ENCODE measurements at regions of chr22 and their contacts with region 1.

Region 1: DNA sequence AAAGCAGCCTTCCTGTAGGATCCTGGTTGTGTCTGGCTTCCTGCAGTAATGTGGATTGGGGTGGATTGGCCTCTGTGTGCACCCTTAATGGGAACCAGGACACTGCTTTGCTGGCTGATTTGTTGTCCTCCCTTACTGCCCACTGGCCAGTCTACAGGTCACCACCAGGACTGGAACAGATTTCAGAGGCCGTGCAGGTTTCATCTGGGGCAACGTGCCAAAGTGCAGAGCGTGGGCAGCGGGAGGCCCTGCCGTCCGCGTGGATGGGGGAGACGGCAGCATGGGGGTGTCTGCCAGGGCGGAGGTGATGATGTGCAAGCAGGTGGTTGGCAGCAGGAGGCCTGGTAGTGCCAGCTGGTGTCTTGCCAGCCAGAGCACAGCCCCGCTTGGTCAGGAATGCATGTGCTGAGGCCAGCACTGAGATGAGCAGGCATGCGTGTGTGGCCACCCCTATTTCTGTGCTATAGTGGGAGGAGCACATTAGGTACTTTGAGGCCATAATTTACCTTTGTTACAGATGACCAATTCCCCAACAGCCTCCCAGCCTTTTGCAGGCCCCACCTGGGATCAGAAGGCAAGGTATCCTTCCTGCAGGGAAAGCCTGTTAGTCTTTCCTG is 24.3 kb downstream of the BCR start:
- DNase-seq: no peak
- ATAC-seq: no peak
- H3K4me3 Mint-ChIP-seq: no peak overlapping the region
- H3K27ac Mint-ChIP-seq: no peak overlapping the region
- H3K4me1 Mint-ChIP-seq: peaks cover 39% of the 10 kb centered on the region
- H3K27me3 Mint-ChIP-seq: no peaks in the 10 kb centered on the region
- CTCF ChIP-seq: no peak

Region 2: GRCh38 chr22:23240639-23241389 is 36.2 kb after region 1 on chr22:
- CTCF ChIA-PET with region 1: no interaction called
- POLR2A ChIA-PET with region 1: no interaction called
- intact Hi-C with region 1: loop called (anchors 5 kb)
- DNase-seq: no peak
- ATAC-seq: peak; percentile 32
- H3K4me3 Mint-ChIP-seq: no peak overlapping the region
- H3K27ac Mint-ChIP-seq: peak overlapping the region; percentile 5
- H3K4me1 Mint-ChIP-seq: peaks cover 42% of the 10 kb centered on the region
- H3K27me3 Mint-ChIP-seq: no peaks in the 10 kb centered on the region
- CTCF ChIP-seq: no peak